Prostate gland (tissue), 2 donors: ENCODE measurements at regions of chr15 and their contacts with region 1.

Region 1: GRCh38 chr15:90598031-90598577 is 68.4 kb downstream of the CRTC3 start:
- DNase-seq: no peak
- H3K4me3 ChIP-seq: no peak overlapping the region
- H3K27ac ChIP-seq: peak overlapping the region; percentile 4 to 19
- H3K4me1 ChIP-seq: peaks cover 13% of the 10 kb centered on the region
- H3K27me3 ChIP-seq: no peaks in the 10 kb centered on the region
- CTCF ChIP-seq: no peak
- POLR2A ChIP-seq: no peak

Region 2: GRCh38 chr15:90557186-90558084 is 40.7 kb before region 1 on chr15:
- intact Hi-C with region 1: loop called (anchors 5 kb)
- DNase-seq: peak; percentile 53
- H3K4me3 ChIP-seq: no peak overlapping the region
- H3K27ac ChIP-seq: peak overlapping the region; percentile 47 to 50
- H3K4me1 ChIP-seq: peaks cover 3% of the 10 kb centered on the region
- H3K27me3 ChIP-seq: no peaks in the 10 kb centered on the region
- CTCF ChIP-seq: no peak
- POLR2A ChIP-seq: no peak

Region 3: DNA sequence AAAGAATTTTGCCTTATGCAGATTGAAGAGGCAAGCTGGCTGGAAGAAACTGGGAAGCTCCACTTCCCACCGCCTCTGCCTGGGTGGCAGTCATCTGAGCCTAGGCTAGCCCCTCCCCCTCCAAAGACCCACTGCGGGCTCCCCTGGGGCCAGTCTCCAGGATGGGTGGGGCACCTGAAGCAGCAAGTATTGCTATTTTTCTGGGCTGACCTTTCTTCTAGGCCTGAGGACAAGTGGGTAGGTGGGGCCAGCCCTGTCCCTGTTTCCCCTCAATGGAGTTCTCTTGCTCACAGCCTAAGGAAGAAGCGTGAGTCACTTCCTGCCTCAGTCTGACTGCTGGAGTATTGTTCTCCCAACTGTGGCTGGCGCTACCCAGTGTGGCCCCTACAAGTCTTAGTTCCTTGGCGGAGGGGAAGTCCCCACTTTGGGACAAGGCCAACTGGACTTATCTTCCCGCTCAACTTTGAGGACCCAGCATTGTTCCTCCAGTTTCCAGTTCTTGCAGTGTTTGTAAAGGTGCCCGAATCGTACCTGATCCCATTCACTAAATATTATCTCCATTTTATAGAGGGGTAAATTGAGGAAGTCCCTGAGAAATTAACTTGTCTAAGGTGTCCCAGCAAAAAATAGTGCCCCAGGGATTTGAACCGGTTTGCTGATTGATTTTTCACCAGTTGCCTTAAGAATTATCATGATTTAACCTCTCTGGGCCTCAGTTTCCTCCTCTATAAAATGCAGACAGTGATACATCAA is 271.7 kb after region 1 on chr15:
- intact Hi-C with region 1: no loop called
- DNase-seq: no peak
- H3K4me3 ChIP-seq: no peak overlapping the region
- H3K27ac ChIP-seq: peak overlapping the region; percentile 93 to 94
- H3K4me1 ChIP-seq: peaks cover 20% of the 10 kb centered on the region
- H3K27me3 ChIP-seq: no peaks in the 10 kb centered on the region
- CTCF ChIP-seq: no peak
- POLR2A ChIP-seq: no peak